T-cell (primary cell): ENCODE measurements at regions of chr6 and their contacts with region 1.

Region 1: GRCh38 chr6:34459899-34460593 is 5.8 kb upstream of the PACSIN1 start:
- DNase-seq: peak in 33 of 35 experiments; percentile 6 to 75 (median 32)
- ATAC-seq: peak; percentile 63 to 81 (median 72)
- H3K4me3 ChIP-seq: no peak overlapping the region
- H3K4me3 Mint-ChIP-seq: no peak overlapping the region
- H3K27ac ChIP-seq: no peak overlapping the region
- H3K27ac Mint-ChIP-seq: no peak overlapping the region
- H3K4me1 ChIP-seq: no peaks in the 10 kb centered on the region
- H3K4me1 Mint-ChIP-seq: peaks cover 0 to 1% (median 1%) of the 10 kb centered on the region in 3 donors
- H3K27me3 ChIP-seq: peaks cover 4 to 23% of the 10 kb centered on the region in 2 experiments
- H3K27me3 Mint-ChIP-seq: peaks cover 8 to 13% of the 10 kb centered on the region in 2 donors

Region 2: DNA sequence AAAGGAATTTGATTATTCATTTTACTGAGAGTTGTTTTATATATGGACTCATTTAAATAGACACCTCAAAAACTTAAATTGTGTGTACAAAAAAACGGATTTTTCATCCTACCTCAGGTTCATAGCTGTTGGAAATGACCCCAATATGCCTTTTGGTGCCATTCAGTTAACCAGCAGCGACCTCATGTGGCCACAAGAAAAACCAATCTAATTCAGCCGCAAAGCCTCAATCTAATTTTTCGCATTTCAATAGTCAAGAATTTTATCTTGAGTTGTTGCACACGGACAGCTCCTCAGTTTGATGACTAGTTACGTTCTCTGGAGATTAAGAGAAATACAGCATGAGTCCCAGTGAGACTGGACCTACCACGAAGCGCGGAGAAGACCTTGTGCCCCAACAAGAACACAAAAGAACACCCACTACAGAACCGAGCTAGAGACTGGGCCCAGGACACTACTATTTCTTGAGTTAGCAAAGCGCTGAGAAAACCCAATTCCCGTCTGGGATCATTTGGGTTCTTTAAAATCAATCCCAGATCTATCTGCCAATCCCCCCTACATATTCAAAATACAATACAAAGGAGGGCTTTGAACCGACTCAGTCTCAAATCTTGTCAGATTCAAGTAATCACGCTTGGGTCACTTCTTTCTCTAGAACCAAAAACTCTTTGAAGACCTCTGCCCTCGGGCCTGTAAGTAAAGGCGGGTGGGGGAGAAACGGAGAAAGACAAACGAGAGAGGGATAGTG is 680.0 kb after region 1 on chr6:
- CTCF ChIA-PET with region 1: interaction called in 1 of 2 experiments, 11 read pairs
- POLR2A ChIA-PET with region 1: no interaction called
- DNase-seq: peak in 29 of 35 experiments; percentile 9 to 80 (median 30)
- ATAC-seq: peak in 1 of 4 experiments; percentile 46
- H3K4me3 ChIP-seq: no peak overlapping the region
- H3K4me3 Mint-ChIP-seq: peak overlapping the region; percentile 1 to 49 (median 29)
- H3K27ac ChIP-seq: no peak overlapping the region
- H3K27ac Mint-ChIP-seq: peak overlapping the region in 1 of 2 donors; percentile 20
- H3K4me1 ChIP-seq: peaks cover 0 to 18% of the 10 kb centered on the region in 2 experiments
- H3K4me1 Mint-ChIP-seq: peaks cover 12 to 17% (median 13%) of the 10 kb centered on the region in 3 donors
- H3K27me3 ChIP-seq: peaks cover 0 to 16% of the 10 kb centered on the region in 2 experiments
- H3K27me3 Mint-ChIP-seq: peaks cover 20% of the 10 kb centered on the region in 2 donors